PC-9 (cell line): ENCODE measurements at regions of chr1 and their contacts with region 1.

Region 1: GRCh38 chr1:239898062-239898730 is 193.5 kb upstream of the FMN2 start:
- DNase-seq: peak; percentile 65 to 76
- H3K4me3 ChIP-seq: no peak overlapping the region
- H3K27ac ChIP-seq: no peak overlapping the region
- H3K4me1 ChIP-seq: peaks cover 18% of the 10 kb centered on the region
- H3K27me3 ChIP-seq: no peaks in the 10 kb centered on the region
- CTCF ChIP-seq: peak; percentile 98

Region 2: DNA sequence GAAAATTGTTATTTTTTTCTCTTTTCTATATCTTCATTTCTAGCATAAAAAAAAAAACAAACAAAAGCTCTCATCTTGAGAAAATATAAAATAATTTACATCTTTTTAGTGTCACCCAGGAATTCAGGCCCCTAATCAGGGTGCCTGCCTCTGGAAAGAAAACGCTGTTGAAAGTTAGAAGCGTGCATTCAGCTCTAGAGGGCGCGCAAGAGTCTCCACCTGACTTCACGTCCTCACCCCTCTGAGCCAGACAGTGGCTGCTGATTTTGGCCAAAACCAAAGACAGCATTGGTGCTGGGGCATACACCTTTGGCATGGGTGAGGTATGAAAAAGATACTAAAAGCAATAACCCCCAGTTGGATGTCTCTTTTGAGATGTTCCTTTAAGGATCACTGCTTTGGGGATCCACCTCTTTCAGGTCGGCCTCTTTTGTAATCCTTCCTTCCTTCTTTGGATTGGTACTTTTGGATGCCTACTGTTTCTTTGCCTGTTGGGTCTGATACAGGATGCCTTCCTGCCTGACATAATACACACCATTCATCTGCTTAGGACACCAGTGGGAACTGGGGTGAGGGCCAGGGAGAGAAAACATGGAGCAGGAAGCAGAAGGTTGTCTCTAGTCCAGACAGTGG is 589.4 kb before region 1 on chr1:
- CTCF ChIA-PET with region 1: no interaction called
- POLR2A ChIA-PET with region 1: no interaction called
- intact Hi-C with region 1: loop called (anchors 1 kb)
- DNase-seq: peak in 1 of 2 experiments; percentile 28
- H3K4me3 ChIP-seq: no peak overlapping the region
- H3K27ac ChIP-seq: no peak overlapping the region
- H3K4me1 ChIP-seq: no peaks in the 10 kb centered on the region
- H3K27me3 ChIP-seq: no peaks in the 10 kb centered on the region
- CTCF ChIP-seq: peak; percentile 67

Region 3: DNA sequence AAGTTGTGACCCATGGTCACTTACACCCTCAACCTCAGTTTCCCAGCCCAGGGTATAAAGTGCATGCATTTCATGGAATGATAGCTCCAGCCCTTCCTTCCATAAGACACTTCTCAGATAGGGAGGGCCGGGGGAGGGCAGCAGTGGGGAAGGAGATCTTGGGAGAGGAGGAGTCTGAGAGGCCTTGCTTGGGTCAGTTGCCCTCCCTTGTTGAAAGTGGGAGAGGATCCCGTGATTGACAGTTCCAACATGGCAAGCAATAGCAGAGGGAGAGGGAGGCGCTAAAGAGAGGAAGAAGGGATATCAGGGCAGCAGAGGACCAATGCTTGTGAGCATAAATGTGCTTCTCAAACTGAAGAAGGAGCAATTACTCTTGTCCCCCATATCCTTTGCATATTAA is 267.4 kb before region 1 on chr1:
- CTCF ChIA-PET with region 1: no interaction called
- POLR2A ChIA-PET with region 1: no interaction called
- intact Hi-C with region 1: loop called (anchors 10 kb)
- DNase-seq: no peak
- H3K4me3 ChIP-seq: peak overlapping the region; percentile 59; the same call in 1 of the 2 replicates
- H3K27ac ChIP-seq: no peak overlapping the region
- H3K4me1 ChIP-seq: peaks cover 13% of the 10 kb centered on the region
- H3K27me3 ChIP-seq: no peaks in the 10 kb centered on the region
- CTCF ChIP-seq: no peak

Region 4: DNA sequence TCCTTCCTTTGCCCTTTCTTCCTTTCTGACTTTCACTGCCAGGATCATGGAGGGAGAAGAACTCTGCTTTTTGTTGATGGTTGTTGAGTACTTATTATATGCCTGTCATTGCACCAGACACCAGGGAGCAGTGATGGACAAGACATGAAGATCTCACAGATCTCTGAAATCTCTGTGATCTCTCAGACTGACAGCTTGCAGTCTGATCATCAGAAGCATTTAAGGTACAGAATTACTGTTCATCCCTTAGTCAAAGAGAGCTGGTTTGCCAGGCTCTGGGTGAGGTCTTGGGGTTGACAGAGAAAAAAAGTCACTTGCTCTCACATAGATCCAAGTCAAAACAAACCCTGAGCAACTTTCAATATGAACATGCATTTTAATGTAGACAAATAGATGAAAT is 106.0 kb before region 1 on chr1:
- CTCF ChIA-PET with region 1: no interaction called
- POLR2A ChIA-PET with region 1: interaction called, 13 read pairs
- intact Hi-C with region 1: loop called (anchors 2 kb)
- DNase-seq: no peak
- H3K4me3 ChIP-seq: no peak overlapping the region
- H3K27ac ChIP-seq: no peak overlapping the region
- H3K4me1 ChIP-seq: no peaks in the 10 kb centered on the region
- H3K27me3 ChIP-seq: no peaks in the 10 kb centered on the region
- CTCF ChIP-seq: no peak

Region 5: GRCh38 chr1:239814303-239814881 is 83.8 kb before region 1 on chr1:
- CTCF ChIA-PET with region 1: interaction called, 3 read pairs
- POLR2A ChIA-PET with region 1: no interaction called
- intact Hi-C with region 1: loop called (anchors 2 kb)
- DNase-seq: peak; percentile 75 to 95
- H3K4me3 ChIP-seq: peak overlapping the region; percentile 40; the same call in 1 of the 2 replicates
- H3K27ac ChIP-seq: peak overlapping the region; percentile 87
- H3K4me1 ChIP-seq: peaks cover 41% of the 10 kb centered on the region
- H3K27me3 ChIP-seq: no peaks in the 10 kb centered on the region
- CTCF ChIP-seq: no peak